ENCODE measurements at regions of chr11 and their contacts with region 1.

Region 1: GRCh38 chr11:14886513-14886912 is 5.5 kb downstream of the CYP2R1 start:
- DNase-seq: peak; percentile 67 to 83
- H3K4me3 ChIP-seq: no peak overlapping the region
- H3K4me3 Mint-ChIP-seq: peak overlapping the region; percentile 51
- H3K27ac Mint-ChIP-seq: peak overlapping the region; percentile 59
- H3K4me1 ChIP-seq: peaks cover 39% of the 10 kb centered on the region
- H3K4me1 Mint-ChIP-seq: peaks cover 34% of the 10 kb centered on the region
- H3K27me3 ChIP-seq: no peaks in the 10 kb centered on the region
- H3K27me3 Mint-ChIP-seq: no peaks in the 10 kb centered on the region
- CTCF ChIP-seq: no peak

Region 2: GRCh38 chr11:14519917-14520746 is 366.4 kb before region 1 on chr11 and contains the start of gene PSMA1:
- CTCF ChIA-PET with region 1: no interaction called
- POLR2A ChIA-PET with region 1: no interaction called
- intact Hi-C with region 1: loop called (anchors 1 kb)
- DNase-seq: peak; percentile 95 to 96
- H3K4me3 ChIP-seq: peak within 1 kb of the TSS; percentile 80
- H3K4me3 Mint-ChIP-seq: peak within 1 kb of the TSS; percentile 76
- H3K27ac Mint-ChIP-seq: peak within 1 kb of the TSS; percentile 96
- H3K4me1 ChIP-seq: peaks cover 6% of the 10 kb centered on the region; the same call in 1 of the 2 replicates
- H3K4me1 Mint-ChIP-seq: peaks cover 11% of the 10 kb centered on the region
- H3K27me3 ChIP-seq: no peaks in the 10 kb centered on the region
- H3K27me3 Mint-ChIP-seq: no peaks in the 10 kb centered on the region
- CTCF ChIP-seq: peak in 1 of 2 experiments; percentile 13
- total RNA-seq, gene PSMA1: 189 and 194 TPM in 2 replicates

Region 3: GRCh38 chr11:14583252-14584034 is 303.1 kb before region 1 on chr11:
- CTCF ChIA-PET with region 1: no interaction called
- POLR2A ChIA-PET with region 1: no interaction called
- intact Hi-C with region 1: loop called (anchors 5 kb)
- DNase-seq: peak; percentile 57 to 73
- H3K4me3 ChIP-seq: no peak overlapping the region
- H3K4me3 Mint-ChIP-seq: peak overlapping the region; percentile 6
- H3K27ac Mint-ChIP-seq: peak overlapping the region; percentile 32
- H3K4me1 ChIP-seq: peaks cover 33% of the 10 kb centered on the region
- H3K4me1 Mint-ChIP-seq: peaks cover 18% of the 10 kb centered on the region
- H3K27me3 ChIP-seq: no peaks in the 10 kb centered on the region
- H3K27me3 Mint-ChIP-seq: no peaks in the 10 kb centered on the region
- CTCF ChIP-seq: no peak

Region 4: GRCh38 chr11:14852571-14853177 is 33.8 kb before region 1 on chr11:
- CTCF ChIA-PET with region 1: no interaction called
- POLR2A ChIA-PET with region 1: no interaction called
- intact Hi-C with region 1: loop called (anchors 5 kb)
- DNase-seq: peak in 1 of 2 experiments; percentile 53
- H3K4me3 ChIP-seq: no peak overlapping the region
- H3K4me3 Mint-ChIP-seq: no peak overlapping the region
- H3K27ac Mint-ChIP-seq: peak overlapping the region; percentile 40
- H3K4me1 ChIP-seq: no peaks in the 10 kb centered on the region
- H3K4me1 Mint-ChIP-seq: peaks cover 11% of the 10 kb centered on the region
- H3K27me3 ChIP-seq: no peaks in the 10 kb centered on the region
- H3K27me3 Mint-ChIP-seq: no peaks in the 10 kb centered on the region
- CTCF ChIP-seq: no peak

Region 5: GRCh38 chr11:14872032-14872431 is 14.5 kb before region 1 on chr11:
- CTCF ChIA-PET with region 1: no interaction called
- POLR2A ChIA-PET with region 1: no interaction called
- intact Hi-C with region 1: loop called (anchors 2 kb)
- DNase-seq: no peak
- H3K4me3 ChIP-seq: no peak overlapping the region
- H3K4me3 Mint-ChIP-seq: no peak overlapping the region
- H3K27ac Mint-ChIP-seq: no peak overlapping the region
- H3K4me1 ChIP-seq: peaks cover 5% of the 10 kb centered on the region; the same call in 1 of the 2 replicates
- H3K4me1 Mint-ChIP-seq: peaks cover 6% of the 10 kb centered on the region
- H3K27me3 ChIP-seq: no peaks in the 10 kb centered on the region
- H3K27me3 Mint-ChIP-seq: no peaks in the 10 kb centered on the region
- CTCF ChIP-seq: no peak

Region 6: GRCh38 chr11:14969922-14970323 is 83.4 kb after region 1 on chr11:
- CTCF ChIA-PET with region 1: no interaction called
- POLR2A ChIA-PET with region 1: no interaction called
- intact Hi-C with region 1: no loop called
- DNase-seq: peak in 1 of 2 experiments; percentile 58
- H3K4me3 ChIP-seq: no peak overlapping the region
- H3K4me3 Mint-ChIP-seq: no peak overlapping the region
- H3K27ac Mint-ChIP-seq: no peak overlapping the region
- H3K4me1 ChIP-seq: no peaks in the 10 kb centered on the region
- H3K4me1 Mint-ChIP-seq: no peaks in the 10 kb centered on the region
- H3K27me3 ChIP-seq: peaks cover 1% of the 10 kb centered on the region
- H3K27me3 Mint-ChIP-seq: peaks cover 20% of the 10 kb centered on the region
- CTCF ChIP-seq: peak; percentile 34 to 50